Calu3 (cell line): ENCODE measurements at regions of chr17 and their contacts with region 1.

Region 1: DNA sequence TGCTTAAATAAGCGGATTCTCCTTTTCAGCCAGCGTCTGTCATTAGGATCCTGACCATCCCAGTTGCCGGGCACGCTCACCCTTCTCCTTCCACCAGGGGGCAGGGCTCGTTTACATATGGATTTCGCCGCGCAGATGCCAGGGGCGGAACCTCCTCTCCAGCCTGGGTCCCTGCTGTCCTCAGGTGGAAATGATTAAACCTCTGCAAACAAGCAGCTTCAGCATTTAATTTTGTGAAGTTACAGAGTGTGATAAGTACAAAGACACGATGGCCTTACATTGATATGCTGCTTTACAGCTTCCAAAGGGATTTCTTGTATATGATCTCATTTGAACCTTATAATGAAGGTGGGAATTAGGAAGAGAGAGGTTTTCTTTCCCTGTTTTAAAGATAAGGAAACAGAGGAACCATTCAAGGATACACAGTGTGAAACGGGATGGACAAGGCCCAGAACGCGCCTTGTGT is 3.9 kb upstream of the KRT28 start:
- DNase-seq: peak; percentile 100
- H3K4me3 Mint-ChIP-seq: no peak overlapping the region
- H3K27ac Mint-ChIP-seq: no peak overlapping the region
- H3K4me1 Mint-ChIP-seq: no peaks in the 10 kb centered on the region
- H3K27me3 Mint-ChIP-seq: peaks cover 38% of the 10 kb centered on the region
- CTCF ChIP-seq: peak; percentile 100

Region 2: GRCh38 chr17:40536295-40537171 is 267.1 kb before region 1 on chr17:
- CTCF ChIA-PET with region 1: interaction called, 24 read pairs
- intact Hi-C with region 1: loop called (anchors 1 kb)
- DNase-seq: peak; percentile 68
- H3K4me3 Mint-ChIP-seq: no peak overlapping the region
- H3K27ac Mint-ChIP-seq: no peak overlapping the region
- H3K4me1 Mint-ChIP-seq: peaks cover 24% of the 10 kb centered on the region
- H3K27me3 Mint-ChIP-seq: peaks cover 85% of the 10 kb centered on the region
- CTCF ChIP-seq: no peak

Region 3: GRCh38 chr17:40686192-40686591 is 117.5 kb before region 1 on chr17:
- CTCF ChIA-PET with region 1: no interaction called
- intact Hi-C with region 1: no loop called
- DNase-seq: no peak
- H3K4me3 Mint-ChIP-seq: no peak overlapping the region
- H3K27ac Mint-ChIP-seq: no peak overlapping the region
- H3K4me1 Mint-ChIP-seq: no peaks in the 10 kb centered on the region
- H3K27me3 Mint-ChIP-seq: peaks cover 38% of the 10 kb centered on the region
- CTCF ChIP-seq: no peak

Region 4: DNA sequence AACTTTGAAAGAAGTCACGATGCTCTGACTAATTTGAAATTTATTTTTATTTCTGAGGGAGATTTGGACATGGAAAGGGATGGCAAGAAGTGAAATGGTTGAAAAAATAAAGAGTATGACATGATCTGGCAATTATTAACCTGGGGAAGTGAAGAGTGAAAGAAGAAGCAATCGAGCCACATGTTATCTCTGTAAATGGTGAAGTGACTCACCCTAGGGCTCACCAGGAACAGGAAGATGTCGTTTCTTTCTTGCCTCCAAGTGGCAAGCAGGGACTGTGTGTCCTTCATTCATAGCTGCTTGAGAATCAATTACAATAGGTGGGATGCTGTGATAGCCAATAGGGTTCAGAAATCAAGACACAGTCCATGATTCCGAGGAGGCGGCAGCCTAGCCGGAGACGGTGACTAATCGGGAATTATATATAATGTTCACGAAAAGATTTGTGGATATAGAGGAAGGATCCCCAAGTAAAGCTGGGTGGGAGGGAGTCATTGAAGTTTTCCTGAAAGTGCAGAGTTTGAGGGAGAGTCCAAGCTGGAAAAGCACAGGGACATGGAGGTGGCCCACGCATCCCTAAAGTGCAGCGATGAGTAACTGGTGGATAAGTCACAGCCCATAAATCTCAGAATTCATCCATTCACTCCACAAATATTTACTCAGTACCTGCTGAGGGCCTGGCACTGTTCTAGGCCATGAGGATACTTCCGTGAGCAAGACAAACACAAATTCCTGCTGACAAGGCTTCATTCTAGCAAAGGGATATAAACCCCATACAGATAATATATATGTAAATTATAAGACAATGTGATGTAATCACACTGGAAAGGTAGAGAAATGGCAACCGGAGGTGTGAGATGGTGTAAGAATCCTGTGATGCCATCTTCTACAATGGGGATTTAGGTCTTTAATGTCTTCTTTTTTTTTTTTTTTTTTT is 99.7 kb after region 1 on chr17:
- CTCF ChIA-PET with region 1: interaction called, 13 read pairs
- intact Hi-C with region 1: loop called (anchors 1 kb)
- DNase-seq: peak; percentile 82
- H3K4me3 Mint-ChIP-seq: peak overlapping the region; percentile 51
- H3K27ac Mint-ChIP-seq: peak overlapping the region; percentile 92
- H3K4me1 Mint-ChIP-seq: peaks cover 86% of the 10 kb centered on the region
- H3K27me3 Mint-ChIP-seq: no peaks in the 10 kb centered on the region
- CTCF ChIP-seq: no peak

Region 5: DNA sequence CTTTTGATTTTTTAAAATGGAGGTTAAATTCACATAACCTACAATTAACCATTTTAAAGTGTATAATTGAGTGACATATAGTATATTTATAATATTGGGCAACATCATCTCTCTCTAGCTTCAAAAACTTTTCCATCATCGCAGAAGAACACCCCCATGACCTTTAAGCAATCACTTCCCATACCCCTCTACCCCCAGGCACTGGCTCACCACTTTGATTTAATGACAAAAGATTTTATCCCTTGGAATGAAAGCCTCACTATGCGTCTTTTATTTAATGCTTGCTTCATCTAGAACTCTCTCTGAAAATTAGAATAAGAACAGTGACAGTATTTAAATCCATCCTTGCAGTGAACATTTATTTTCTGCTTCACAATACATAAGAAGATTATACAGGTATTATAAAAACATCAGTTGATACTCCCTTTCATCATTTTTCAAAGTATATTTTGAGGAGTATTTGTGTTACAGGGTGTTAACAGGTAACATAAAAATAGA is 234.3 kb after region 1 on chr17:
- CTCF ChIA-PET with region 1: no interaction called
- intact Hi-C with region 1: no loop called
- DNase-seq: no peak
- H3K4me3 Mint-ChIP-seq: no peak overlapping the region
- H3K27ac Mint-ChIP-seq: no peak overlapping the region
- H3K4me1 Mint-ChIP-seq: peaks cover 49% of the 10 kb centered on the region
- H3K27me3 Mint-ChIP-seq: no peaks in the 10 kb centered on the region
- CTCF ChIP-seq: no peak

Region 6: GRCh38 chr17:41322094-41322902 is 518.6 kb after region 1 on chr17:
- CTCF ChIA-PET with region 1: interaction called, 4 read pairs
- intact Hi-C with region 1: loop called (anchors 1 kb)
- DNase-seq: no peak
- H3K4me3 Mint-ChIP-seq: no peak overlapping the region
- H3K27ac Mint-ChIP-seq: no peak overlapping the region
- H3K4me1 Mint-ChIP-seq: peaks cover 23% of the 10 kb centered on the region
- H3K27me3 Mint-ChIP-seq: no peaks in the 10 kb centered on the region
- CTCF ChIP-seq: peak; percentile 80